RWPE1 (cell line): ENCODE measurements at regions of chr14 and their contacts with region 1.

Region 1: DNA sequence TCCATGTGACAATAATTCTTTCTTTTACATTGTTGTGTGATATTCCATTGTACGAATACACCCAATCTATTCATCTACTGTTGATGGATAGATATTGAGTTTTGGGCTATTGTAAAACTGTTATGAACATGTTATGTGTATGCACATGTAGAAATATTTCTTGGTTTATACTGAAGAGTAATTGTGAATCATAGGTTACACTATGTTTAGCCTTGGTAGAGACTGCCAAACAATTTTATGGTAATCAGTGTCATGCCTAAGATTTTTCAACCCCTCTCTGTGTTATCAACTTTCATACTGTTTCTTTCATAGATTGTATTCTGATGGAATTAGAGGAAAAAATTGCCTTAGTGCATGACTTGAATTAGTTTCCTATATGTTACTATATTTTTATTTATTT is 39.5 kb downstream of the FRMD6 start:
- DNase-seq: peak; percentile 4
- H3K27ac ChIP-seq: no peak overlapping the region
- CTCF ChIP-seq: no peak

Region 2: GRCh38 chr14:51242545-51243490 is 448.4 kb before region 1 on chr14:
- CTCF ChIA-PET with region 1: interaction called, 12 read pairs
- POLR2A ChIA-PET with region 1: no interaction called
- DNase-seq: no peak
- H3K27ac ChIP-seq: no peak overlapping the region
- CTCF ChIP-seq: no peak

Region 3: GRCh38 chr14:52259434-52259833 is 568.3 kb after region 1 on chr14:
- CTCF ChIA-PET with region 1: no interaction called
- POLR2A ChIA-PET with region 1: no interaction called
- DNase-seq: no peak
- H3K27ac ChIP-seq: no peak overlapping the region
- CTCF ChIP-seq: no peak